BJ (cell line): ENCODE measurements at regions of chr15 and their contacts with region 1.

Region 1: DNA sequence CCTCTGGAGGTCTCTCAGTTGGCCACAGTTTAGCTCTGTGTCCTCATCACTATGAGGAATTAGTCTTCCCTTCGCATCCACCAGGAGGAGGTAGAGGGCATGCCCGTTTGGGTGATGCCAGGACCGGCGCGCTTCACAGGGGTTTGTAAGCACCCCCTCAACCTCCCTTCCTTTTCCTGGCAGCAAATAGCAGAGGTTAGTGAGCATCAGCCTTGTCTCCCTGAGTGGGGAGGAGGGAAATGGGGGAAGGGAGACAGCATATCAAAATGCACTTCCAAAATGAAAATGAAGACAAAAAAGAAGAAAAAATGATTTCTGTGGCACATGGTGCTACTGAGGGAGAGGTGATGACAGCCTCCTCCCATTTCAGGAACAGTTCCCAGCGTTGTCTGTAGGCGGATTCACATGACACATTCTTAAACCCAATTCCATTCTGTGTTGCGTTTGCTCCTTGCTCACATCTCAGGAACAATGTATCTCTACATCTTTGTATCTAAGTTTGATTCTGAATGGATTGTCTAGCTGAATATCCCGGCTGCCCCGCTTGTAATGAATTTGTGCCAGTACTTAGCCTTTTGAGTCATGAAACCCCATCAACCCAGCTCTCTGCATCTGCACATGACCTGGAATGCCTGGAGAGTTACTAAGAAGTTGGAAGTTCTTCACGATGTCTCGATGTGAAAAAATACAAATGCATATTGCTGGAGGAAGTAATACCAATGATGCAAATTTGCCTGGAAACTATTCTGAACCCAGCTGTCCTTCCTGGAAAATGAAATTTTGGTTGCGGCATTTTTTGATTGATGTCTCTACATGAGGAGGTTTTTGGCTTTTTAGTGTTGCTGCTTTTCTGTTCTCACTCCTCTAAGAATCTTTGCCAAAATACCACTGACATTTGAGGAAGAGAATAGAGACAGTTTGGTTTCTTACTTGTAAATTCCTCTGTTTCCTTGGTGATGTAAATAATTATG is 45.2 kb downstream of the TYRO3 start:
- DNase-seq: peak; percentile 53
- H3K4me3 ChIP-seq: peak overlapping the region; percentile 28
- H3K27me3 ChIP-seq: no peaks in the 10 kb centered on the region; the same call in 1 of the 2 replicates
- CTCF ChIP-seq: peak; percentile 88

Region 2: GRCh38 chr15:41377978-41378377 is 226.2 kb before region 1 on chr15:
- CTCF ChIA-PET with region 1: no interaction called
- POLR2A ChIA-PET with region 1: no interaction called
- DNase-seq: no peak
- H3K4me3 ChIP-seq: no peak overlapping the region
- H3K27me3 ChIP-seq: no peaks in the 10 kb centered on the region
- CTCF ChIP-seq: no peak

Region 3: GRCh38 chr15:41585127-41586047 is 18.8 kb before region 1 on chr15:
- CTCF ChIA-PET with region 1: interaction called, 29 read pairs
- POLR2A ChIA-PET with region 1: no interaction called
- DNase-seq: no peak
- H3K4me3 ChIP-seq: peak overlapping the region; percentile 30
- H3K27me3 ChIP-seq: peaks cover 2% of the 10 kb centered on the region; the same call in 1 of the 2 replicates
- CTCF ChIP-seq: peak; percentile 58